Activated CD4-positive, alpha-beta memory T cell treated with anti-CD3 and anti-CD28 coated beads, Interleukin-2, amount 10 ng/mL, durations not matched to agents 7 days and 5 days (primary cell): ENCODE measurements at regions of chr3 and their contacts with region 1.

Region 1: DNA sequence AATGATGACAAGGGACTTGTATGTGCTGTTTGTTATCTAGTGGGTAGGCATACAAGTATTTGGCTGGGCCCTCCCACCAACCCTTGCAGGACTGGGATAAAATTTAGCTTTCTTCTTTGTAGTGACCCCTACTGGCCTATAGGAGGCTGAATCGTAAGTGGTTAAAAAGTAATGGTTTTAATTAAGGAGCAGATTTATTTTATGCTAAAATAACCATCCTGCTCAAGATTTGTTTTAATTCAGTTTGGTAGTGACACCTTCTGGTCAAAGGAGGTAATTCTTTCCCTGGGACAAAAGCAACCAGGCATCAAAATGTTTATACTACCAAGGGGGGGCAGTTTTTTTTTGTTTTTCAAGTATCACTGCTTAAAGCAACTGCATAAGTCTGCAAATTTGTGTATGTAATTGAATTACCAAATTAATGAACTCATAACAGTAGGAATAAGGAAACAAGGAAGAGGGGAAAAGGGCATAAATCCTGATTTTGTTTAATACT is 70.7 kb downstream of the TOP2B start:
- DNase-seq: no peak
- H3K4me3 Mint-ChIP-seq: no peak overlapping the region
- H3K27ac Mint-ChIP-seq: no peak overlapping the region
- H3K4me1 Mint-ChIP-seq: no peaks in the 10 kb centered on the region
- H3K27me3 Mint-ChIP-seq: no peaks in the 10 kb centered on the region

Region 2: GRCh38 chr3:25604107-25604805 is 10.2 kb after region 1 on chr3:
- CTCF ChIA-PET with region 1: interaction called, 26 read pairs
- POLR2A ChIA-PET with region 1: no interaction called
- DNase-seq: no peak
- H3K4me3 Mint-ChIP-seq: no peak overlapping the region
- H3K27ac Mint-ChIP-seq: no peak overlapping the region
- H3K4me1 Mint-ChIP-seq: peaks cover 8% of the 10 kb centered on the region
- H3K27me3 Mint-ChIP-seq: no peaks in the 10 kb centered on the region